A549 (cell line): ENCODE measurements at regions of chr15 and their contacts with region 1.

Region 1: DNA sequence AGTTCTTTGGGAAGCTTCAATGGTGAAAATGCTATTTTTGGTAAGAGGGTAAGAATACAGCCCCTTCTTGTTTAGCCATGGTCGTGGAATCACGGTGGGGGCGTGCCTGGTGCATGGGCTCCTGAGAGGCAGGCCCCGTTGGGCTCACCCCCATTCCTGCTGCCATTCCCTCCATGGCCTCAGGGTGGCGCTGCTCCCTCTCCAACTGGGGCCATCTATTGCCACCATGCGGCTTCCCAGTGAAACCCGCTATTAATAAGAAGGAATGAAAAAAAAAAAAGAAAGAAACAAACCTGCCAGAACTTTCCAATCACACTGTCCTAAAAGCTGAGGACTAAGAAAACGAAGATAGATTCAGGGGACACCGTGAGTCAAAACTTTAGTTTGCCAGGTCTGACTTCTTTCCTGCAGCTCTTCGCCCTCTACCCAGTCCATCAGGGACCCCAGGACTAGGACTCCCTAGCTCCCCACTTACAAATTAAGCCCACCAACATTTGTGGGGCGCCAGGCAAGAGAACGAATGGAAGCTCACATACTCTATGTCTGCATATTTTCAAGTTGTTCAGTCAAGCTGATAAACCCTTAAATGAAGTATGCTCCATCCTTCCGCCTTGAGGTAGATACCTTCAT is 30.6 kb upstream of the ABHD2 start:
- DNase-seq: peak; percentile 80 to 91
- ATAC-seq: peak; percentile 93 to 97
- H3K4me3 ChIP-seq: no peak overlapping the region
- H3K27ac ChIP-seq: peak overlapping the region; percentile 55 to 57; a peak in 5 of 6 replicates
- H3K4me1 ChIP-seq: peaks cover 6% of the 10 kb centered on the region; the same call in 1 of the 3 replicates
- CTCF ChIP-seq: peak; percentile 100
- EP300 ChIP-seq: no peak
- POLR2A ChIP-seq: no peak
- RAD21 ChIP-seq: peak; percentile 100

Region 2: GRCh38 chr15:88849376-88850072 is 208.1 kb before region 1 on chr15:
- CTCF ChIA-PET with region 1: no interaction called
- POLR2A ChIA-PET with region 1: no interaction called
- DNase-seq: no peak
- ATAC-seq: no peak
- H3K4me3 ChIP-seq: no peak overlapping the region
- H3K27ac ChIP-seq: no peak overlapping the region
- H3K4me1 ChIP-seq: no peaks in the 10 kb centered on the region
- CTCF ChIP-seq: no peak
- EP300 ChIP-seq: no peak
- POLR2A ChIP-seq: no peak
- RAD21 ChIP-seq: no peak

Region 3: GRCh38 chr15:89017370-89018066 is 40.1 kb before region 1 on chr15:
- CTCF ChIA-PET with region 1: interaction called, 24 read pairs
- POLR2A ChIA-PET with region 1: no interaction called
- DNase-seq: peak; percentile 82 to 84
- ATAC-seq: peak; percentile 90 to 95
- H3K4me3 ChIP-seq: peak overlapping the region; percentile 37
- H3K27ac ChIP-seq: peak overlapping the region; percentile 68 to 79
- H3K4me1 ChIP-seq: peaks cover 17% of the 10 kb centered on the region
- CTCF ChIP-seq: peak; percentile 97
- EP300 ChIP-seq: no peak
- POLR2A ChIP-seq: no peak
- RAD21 ChIP-seq: peak; percentile 93 to 95

Region 4: DNA sequence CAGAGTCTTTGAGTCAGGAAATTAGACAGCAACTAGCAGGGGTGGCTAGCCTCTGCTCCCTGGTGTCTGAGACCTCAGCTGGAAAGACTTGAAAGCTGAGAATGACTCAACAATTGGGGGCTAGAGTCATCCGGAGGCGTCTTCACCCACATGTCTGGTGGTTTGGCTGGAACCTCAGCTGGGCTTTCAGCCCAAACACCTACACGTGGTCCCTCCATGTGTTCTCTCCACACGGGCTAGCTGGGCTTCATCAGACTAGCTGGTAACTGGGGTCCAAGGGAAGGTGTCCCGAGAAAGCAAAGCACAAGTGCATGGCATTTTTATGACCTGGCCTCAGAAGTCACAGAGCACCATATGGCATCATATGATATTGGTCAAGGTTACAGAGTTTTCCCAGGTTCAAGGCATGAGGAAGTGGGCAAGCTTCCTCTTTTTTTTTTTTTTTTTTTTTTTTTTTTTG is 10.7 kb after region 1 on chr15:
- CTCF ChIA-PET with region 1: interaction called, 58 read pairs
- POLR2A ChIA-PET with region 1: no interaction called
- DNase-seq: peak in 1 of 2 experiments; percentile 46
- ATAC-seq: peak; percentile 67; a peak in 4 of 6 replicates
- H3K4me3 ChIP-seq: no peak overlapping the region
- H3K27ac ChIP-seq: peak overlapping the region; percentile 34 to 57; a peak in 4 of 6 replicates
- H3K4me1 ChIP-seq: peaks cover 25% of the 10 kb centered on the region; the same call in 2 of the 3 replicates
- CTCF ChIP-seq: no peak
- EP300 ChIP-seq: no peak
- POLR2A ChIP-seq: no peak
- RAD21 ChIP-seq: no peak

Region 5: DNA sequence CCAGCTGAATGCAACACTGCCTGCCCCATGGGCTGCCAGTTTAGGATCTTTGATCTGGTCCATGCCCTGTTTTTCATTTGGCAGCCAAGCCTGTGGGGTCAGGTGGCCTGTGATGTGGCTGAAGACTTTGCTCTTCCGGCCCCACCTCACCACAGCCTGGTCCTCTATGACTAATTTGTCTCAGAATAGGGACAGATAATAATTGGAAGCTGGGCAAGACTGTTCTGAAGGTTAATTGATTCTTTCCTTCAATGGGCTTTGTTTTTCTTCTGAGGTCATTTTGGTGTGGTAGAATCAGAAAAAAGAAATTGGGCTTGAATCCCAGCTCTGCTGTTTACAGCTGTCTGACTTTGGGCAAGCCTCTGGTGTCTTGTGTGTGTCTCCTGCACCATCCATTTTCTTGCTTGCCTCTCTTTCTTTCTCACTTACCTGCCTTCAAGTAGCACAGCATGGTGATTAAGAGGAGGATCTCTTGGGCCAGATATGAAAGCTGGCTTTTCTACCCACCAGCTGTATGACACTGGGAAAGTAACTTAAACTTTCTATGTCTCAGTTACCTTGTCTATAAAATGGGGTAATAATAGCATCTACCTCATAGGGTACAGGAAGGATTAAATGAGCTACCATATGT is 54.8 kb after region 1 on chr15:
- CTCF ChIA-PET with region 1: interaction called, 65 read pairs
- POLR2A ChIA-PET with region 1: no interaction called
- DNase-seq: peak in 1 of 2 experiments; percentile 71
- ATAC-seq: peak; percentile 55 to 65; a peak in 4 of 6 replicates
- H3K4me3 ChIP-seq: no peak overlapping the region
- H3K27ac ChIP-seq: peak overlapping the region; percentile 87 to 95
- H3K4me1 ChIP-seq: peaks cover 85% of the 10 kb centered on the region
- CTCF ChIP-seq: no peak
- EP300 ChIP-seq: 0 out of 5 replicates have a peak, but pooled peaks of 1 of the 2 experiments have one; percentile 16
- POLR2A ChIP-seq: no peak
- RAD21 ChIP-seq: no peak

Region 6: DNA sequence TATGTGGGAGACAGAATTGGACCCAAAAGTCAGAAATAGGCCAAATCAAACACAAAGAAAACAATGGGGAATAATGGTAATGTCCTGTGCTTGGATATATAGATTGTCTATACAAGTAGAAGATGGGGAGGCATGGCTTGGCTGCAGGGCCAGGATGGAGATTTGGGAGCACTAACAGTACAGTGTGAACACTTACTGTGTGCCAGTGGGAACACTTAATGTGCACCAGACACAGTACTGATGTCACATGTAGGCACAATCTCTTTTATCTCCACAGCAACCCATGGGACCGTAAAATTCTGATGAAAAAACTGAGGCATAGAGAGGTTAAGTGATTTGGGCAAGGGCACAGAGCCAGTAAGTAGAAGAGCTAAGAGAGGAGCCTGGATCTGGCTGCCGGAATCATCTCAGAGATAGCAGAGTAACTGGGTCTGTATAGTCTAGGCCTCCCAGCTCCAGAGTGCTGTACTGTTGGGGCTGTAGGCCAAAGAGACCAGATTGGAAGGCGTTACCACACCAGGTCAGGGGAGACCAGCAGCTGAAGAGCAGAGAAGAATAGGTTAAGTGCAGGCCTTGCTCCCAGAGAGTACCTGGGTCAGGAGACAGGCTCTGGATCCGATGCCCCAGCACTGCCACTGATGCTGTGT is 100.4 kb after region 1 on chr15:
- CTCF ChIA-PET with region 1: interaction called, 735 read pairs
- POLR2A ChIA-PET with region 1: no interaction called
- DNase-seq: no peak
- ATAC-seq: no peak; a peak in 1 of 6 replicates
- H3K4me3 ChIP-seq: no peak overlapping the region
- H3K27ac ChIP-seq: no peak overlapping the region
- H3K4me1 ChIP-seq: no peaks in the 10 kb centered on the region
- CTCF ChIP-seq: no peak
- EP300 ChIP-seq: no peak
- POLR2A ChIP-seq: no peak
- RAD21 ChIP-seq: no peak

Region 7: GRCh38 chr15:89206908-89207331 is 149.3 kb after region 1 on chr15:
- CTCF ChIA-PET with region 1: interaction called, 19 read pairs
- POLR2A ChIA-PET with region 1: no interaction called
- DNase-seq: peak; percentile 82 to 99
- ATAC-seq: peak; percentile 98 to 99
- H3K4me3 ChIP-seq: peak overlapping the region; percentile 36
- H3K27ac ChIP-seq: peak overlapping the region; percentile 23 to 65; a peak in 4 of 6 replicates
- H3K4me1 ChIP-seq: no peaks in the 10 kb centered on the region
- CTCF ChIP-seq: peak; percentile 97
- EP300 ChIP-seq: no peak
- POLR2A ChIP-seq: no peak
- RAD21 ChIP-seq: peak; percentile 93 to 94